ENCODE measurements at regions of chr2 and their contacts with region 1.

Region 1: DNA sequence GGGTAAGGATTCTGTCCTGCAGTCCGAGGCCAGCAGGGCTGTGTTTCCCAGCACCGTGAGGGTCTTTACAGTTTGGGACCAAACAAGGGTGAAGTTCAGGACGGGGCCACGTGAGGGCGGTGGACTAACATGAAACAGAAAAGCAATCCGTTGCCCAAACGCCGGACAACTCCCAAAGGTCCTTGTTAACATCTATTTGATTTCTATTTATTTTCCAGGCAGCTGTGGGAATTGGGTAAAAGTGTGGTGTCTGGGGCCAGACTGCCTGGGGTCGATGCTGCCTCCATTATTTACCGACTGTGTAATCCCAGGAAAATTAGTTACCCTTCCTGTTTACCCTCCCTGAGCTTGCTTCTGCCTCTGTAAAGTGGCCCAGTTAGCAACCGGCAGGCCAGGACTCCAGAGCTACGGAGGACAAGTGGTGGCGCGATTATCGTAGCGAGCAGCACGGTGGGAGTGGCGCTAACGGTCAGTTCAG is 66.3 kb upstream of the TCF7L1 start:
- DNase-seq: peak; percentile 65 to 83 (median 69)
- ATAC-seq: peak; percentile 95
- H3K4me3 ChIP-seq: no peak overlapping the region
- H3K27ac ChIP-seq: no peak overlapping the region
- H3K4me1 ChIP-seq: peaks cover 2 to 7% of the 10 kb centered on the region in 2 experiments; a peak in 3 of 5 replicates
- H3K27me3 ChIP-seq: peaks cover 9 to 34% of the 10 kb centered on the region in 2 experiments
- CTCF ChIP-seq: peak; percentile 81 to 85 (median 82)
- EP300 ChIP-seq: no peak
- POLR2A ChIP-seq: no peak
- RAD21 ChIP-seq: peak; percentile 52 to 81

Region 2: DNA sequence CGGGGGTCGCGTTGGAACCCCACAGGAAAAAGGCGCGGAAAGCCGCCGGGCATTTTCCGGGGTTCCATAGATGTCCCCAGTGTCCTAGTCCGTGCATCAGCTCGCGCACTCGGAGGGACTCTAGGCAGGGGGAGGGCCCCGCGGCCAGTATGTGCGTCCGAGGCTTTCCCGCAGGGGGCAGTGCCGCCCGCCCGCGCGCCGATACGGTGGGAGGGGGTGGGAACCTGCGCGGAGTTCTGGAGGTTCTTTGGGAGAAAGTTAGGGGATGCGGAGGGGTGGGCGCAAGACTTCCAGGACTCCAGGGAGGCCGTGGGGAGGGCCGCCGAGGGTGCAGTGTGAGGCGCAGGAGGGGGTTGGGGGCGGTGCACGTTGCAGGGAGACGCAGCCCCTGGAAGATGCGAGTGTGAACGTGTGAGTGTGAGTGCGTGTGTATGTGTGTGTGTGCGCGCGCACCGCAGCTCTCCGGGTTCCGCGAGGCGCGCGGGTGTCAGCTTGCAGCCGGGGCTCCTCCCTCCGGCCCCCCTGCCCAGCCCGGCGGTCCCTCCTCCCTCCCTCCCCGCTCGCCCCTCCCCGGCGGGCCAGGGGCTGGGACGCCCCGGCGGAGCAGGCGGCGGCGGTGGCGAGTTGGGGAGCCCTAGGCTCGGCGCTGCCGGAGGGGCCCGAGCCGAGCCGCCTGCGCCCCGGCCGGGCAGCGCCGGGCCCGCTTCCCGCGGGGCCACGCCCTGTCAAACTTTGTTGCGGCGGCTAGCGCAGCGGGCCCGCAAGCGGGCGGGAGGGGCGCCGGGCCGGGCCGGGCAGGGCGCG is 66.1 kb after region 1 on chr2 and contains the start of gene TCF7L1:
- CTCF ChIA-PET with region 1: no interaction called
- POLR2A ChIA-PET with region 1: no interaction called
- in situ Hi-C with region 1: no loop called
- intact Hi-C with region 1: loop called (anchors 5 kb)
- DNase-seq: peak; percentile 65 to 90 (median 84)
- ATAC-seq: peak; percentile 97
- H3K4me3 ChIP-seq: peak within 1 kb of the TSS; percentile 40
- H3K27ac ChIP-seq: no peak within 1 kb of the TSS
- H3K4me1 ChIP-seq: peaks cover 0 to 18% of the 10 kb centered on the region in 2 experiments; a peak in 2 of 5 replicates
- H3K27me3 ChIP-seq: peaks cover 18 to 47% of the 10 kb centered on the region in 2 experiments
- CTCF ChIP-seq: peak; percentile 48 to 74 (median 51)
- EP300 ChIP-seq: no peak
- POLR2A ChIP-seq: no peak
- RAD21 ChIP-seq: peak in 1 of 2 experiments; percentile 49; a peak in 2 of 4 replicates
- polyA plus RNA-seq, gene TCF7L1: 0.04 TPM in 1 of 2 experiments, not detected in the other

Region 3: GRCh38 chr2:85226783-85227182 is 159.9 kb after region 1 on chr2:
- CTCF ChIA-PET with region 1: no interaction called
- POLR2A ChIA-PET with region 1: no interaction called
- in situ Hi-C with region 1: no loop called
- intact Hi-C with region 1: no loop called
- DNase-seq: no peak
- ATAC-seq: no peak
- H3K4me3 ChIP-seq: no peak overlapping the region
- H3K27ac ChIP-seq: no peak overlapping the region
- H3K4me1 ChIP-seq: no peaks in the 10 kb centered on the region
- H3K27me3 ChIP-seq: peaks cover 10 to 31% of the 10 kb centered on the region in 2 experiments; a peak in 4 of 5 replicates
- CTCF ChIP-seq: no peak
- EP300 ChIP-seq: no peak
- POLR2A ChIP-seq: no peak
- RAD21 ChIP-seq: no peak

Region 4: DNA sequence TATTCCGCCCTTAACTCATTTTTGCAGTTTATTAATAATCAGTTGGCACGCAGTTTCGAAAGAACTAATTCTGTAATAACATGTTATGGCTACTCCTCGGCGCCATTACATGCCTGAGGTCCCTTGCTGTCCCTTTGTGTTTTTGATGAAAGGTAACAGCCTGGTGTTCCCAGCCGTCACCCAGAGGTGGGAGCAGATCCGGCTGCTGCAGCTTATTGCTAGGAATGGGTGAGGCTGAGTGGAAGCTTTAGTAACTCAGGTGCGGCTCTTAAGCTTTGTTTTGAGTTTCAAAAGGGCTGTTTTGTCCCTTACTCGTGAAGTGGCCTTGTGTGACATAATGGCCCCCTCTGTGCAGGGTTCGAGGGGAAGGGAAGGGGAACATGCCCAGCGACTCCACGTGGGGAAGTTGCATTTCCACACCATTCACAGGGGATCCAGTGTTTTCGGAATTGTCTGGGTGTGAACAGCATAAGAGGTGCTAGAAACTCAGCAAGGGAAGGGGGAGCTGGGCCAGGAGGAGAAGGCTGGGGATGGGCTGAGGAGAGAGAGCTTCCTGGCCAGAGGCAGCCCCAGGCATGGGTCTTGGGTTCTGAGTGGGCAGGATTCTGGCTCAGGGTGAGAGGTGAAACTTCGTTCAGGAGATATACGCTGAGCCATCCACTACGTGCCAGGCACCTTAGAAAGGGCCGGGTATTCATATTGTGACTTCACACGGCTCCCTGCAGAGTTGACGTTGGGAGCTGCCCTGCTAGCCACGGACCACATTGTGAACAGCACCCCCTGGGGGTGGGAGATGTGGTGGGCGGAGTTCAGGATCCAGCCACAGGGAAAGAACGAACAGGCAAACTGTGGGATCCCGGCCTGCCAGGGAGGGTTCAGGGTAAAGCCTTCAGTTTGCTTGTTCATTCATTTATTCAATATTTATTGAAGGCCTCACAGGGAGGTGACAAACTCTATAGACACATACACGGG is 176.5 kb after region 1 on chr2:
- CTCF ChIA-PET with region 1: interaction called, 11 read pairs
- POLR2A ChIA-PET with region 1: no interaction called
- in situ Hi-C with region 1: no loop called
- intact Hi-C with region 1: loop called (anchors 1 kb)
- DNase-seq: peak; percentile 70 to 76 (median 74)
- ATAC-seq: peak; percentile 96
- H3K4me3 ChIP-seq: no peak overlapping the region
- H3K27ac ChIP-seq: no peak overlapping the region
- H3K4me1 ChIP-seq: no peaks in the 10 kb centered on the region
- H3K27me3 ChIP-seq: peaks cover 39 to 69% of the 10 kb centered on the region in 2 experiments
- CTCF ChIP-seq: peak; percentile 68 to 77 (median 73)
- EP300 ChIP-seq: no peak
- POLR2A ChIP-seq: no peak
- RAD21 ChIP-seq: peak; percentile 13 to 58; a peak in 2 of 4 replicates

Region 5: DNA sequence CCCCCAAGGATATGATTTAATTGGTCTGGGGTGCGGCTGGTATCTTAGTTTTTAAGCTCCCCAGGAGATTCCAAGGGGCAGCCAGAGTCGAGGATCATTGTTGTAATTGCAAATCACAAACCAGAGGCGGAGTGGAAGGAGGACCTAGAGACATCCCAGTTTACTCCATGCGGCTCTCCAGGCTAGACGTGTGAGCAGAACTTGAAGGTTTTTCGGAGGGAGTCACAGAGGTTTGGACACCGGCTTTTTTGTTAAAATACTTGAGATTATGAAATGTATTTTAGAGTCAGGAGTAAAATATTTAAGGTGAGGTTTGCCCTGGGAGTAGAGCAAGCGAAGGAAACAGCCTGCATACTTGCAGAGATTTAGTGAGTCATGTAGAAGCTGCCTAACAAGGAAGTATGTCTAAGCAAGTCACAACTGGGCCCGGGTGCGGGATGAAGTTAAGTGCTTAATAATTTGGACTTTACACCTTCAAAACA is 221.4 kb after region 1 on chr2:
- CTCF ChIA-PET with region 1: no interaction called
- POLR2A ChIA-PET with region 1: no interaction called
- in situ Hi-C with region 1: loop called (anchors 5 kb)
- intact Hi-C with region 1: loop called (anchors 1 kb)
- DNase-seq: no peak
- ATAC-seq: no peak
- H3K4me3 ChIP-seq: no peak overlapping the region
- H3K27ac ChIP-seq: no peak overlapping the region
- H3K4me1 ChIP-seq: no peaks in the 10 kb centered on the region; a peak in 1 of 5 replicates
- H3K27me3 ChIP-seq: peaks cover 49 to 68% of the 10 kb centered on the region in 2 experiments
- CTCF ChIP-seq: no peak
- EP300 ChIP-seq: no peak
- POLR2A ChIP-seq: no peak
- RAD21 ChIP-seq: no peak

Region 6: GRCh38 chr2:85302121-85302520 is 235.2 kb after region 1 on chr2:
- CTCF ChIA-PET with region 1: interaction called, 10 read pairs
- POLR2A ChIA-PET with region 1: no interaction called
- in situ Hi-C with region 1: no loop called
- intact Hi-C with region 1: loop called (anchors 1 kb)
- DNase-seq: no peak
- ATAC-seq: peak; percentile 13; the same call in 1 of the 3 replicates
- H3K4me3 ChIP-seq: no peak overlapping the region
- H3K27ac ChIP-seq: no peak overlapping the region
- H3K4me1 ChIP-seq: peaks cover 3 to 20% of the 10 kb centered on the region in 2 experiments; a peak in 3 of 5 replicates
- H3K27me3 ChIP-seq: peaks cover 27 to 53% of the 10 kb centered on the region in 2 experiments; a peak in 4 of 5 replicates
- CTCF ChIP-seq: no peak
- EP300 ChIP-seq: no peak
- POLR2A ChIP-seq: no peak
- RAD21 ChIP-seq: no peak

Region 7: GRCh38 chr2:85340034-85340892 is 273.4 kb after region 1 on chr2:
- CTCF ChIA-PET with region 1: no interaction called
- POLR2A ChIA-PET with region 1: no interaction called
- in situ Hi-C with region 1: no loop called
- intact Hi-C with region 1: no loop called
- DNase-seq: no peak
- ATAC-seq: peak; percentile 48; the same call in 2 of the 3 replicates
- H3K4me3 ChIP-seq: no peak overlapping the region
- H3K27ac ChIP-seq: no peak overlapping the region
- H3K4me1 ChIP-seq: peaks cover 0 to 3% of the 10 kb centered on the region in 2 experiments; a peak in 3 of 5 replicates
- H3K27me3 ChIP-seq: no peaks in the 10 kb centered on the region; a peak in 1 of 5 replicates
- CTCF ChIP-seq: no peak
- EP300 ChIP-seq: no peak
- POLR2A ChIP-seq: no peak
- RAD21 ChIP-seq: no peak

Region 8: GRCh38 chr2:85511008-85511811 is 444.3 kb after region 1 on chr2:
- CTCF ChIA-PET with region 1: no interaction called
- POLR2A ChIA-PET with region 1: no interaction called
- in situ Hi-C with region 1: no loop called
- intact Hi-C with region 1: no loop called
- DNase-seq: no peak
- ATAC-seq: no peak; the same call in 2 of the 3 replicates
- H3K4me3 ChIP-seq: no peak overlapping the region
- H3K27ac ChIP-seq: no peak overlapping the region
- H3K4me1 ChIP-seq: no peaks in the 10 kb centered on the region; a peak in 2 of 5 replicates
- H3K27me3 ChIP-seq: no peaks in the 10 kb centered on the region
- CTCF ChIP-seq: no peak
- EP300 ChIP-seq: no peak
- POLR2A ChIP-seq: no peak
- RAD21 ChIP-seq: no peak